ENCODE measurements at regions of chr5 and their contacts with region 1.

Region 1: DNA sequence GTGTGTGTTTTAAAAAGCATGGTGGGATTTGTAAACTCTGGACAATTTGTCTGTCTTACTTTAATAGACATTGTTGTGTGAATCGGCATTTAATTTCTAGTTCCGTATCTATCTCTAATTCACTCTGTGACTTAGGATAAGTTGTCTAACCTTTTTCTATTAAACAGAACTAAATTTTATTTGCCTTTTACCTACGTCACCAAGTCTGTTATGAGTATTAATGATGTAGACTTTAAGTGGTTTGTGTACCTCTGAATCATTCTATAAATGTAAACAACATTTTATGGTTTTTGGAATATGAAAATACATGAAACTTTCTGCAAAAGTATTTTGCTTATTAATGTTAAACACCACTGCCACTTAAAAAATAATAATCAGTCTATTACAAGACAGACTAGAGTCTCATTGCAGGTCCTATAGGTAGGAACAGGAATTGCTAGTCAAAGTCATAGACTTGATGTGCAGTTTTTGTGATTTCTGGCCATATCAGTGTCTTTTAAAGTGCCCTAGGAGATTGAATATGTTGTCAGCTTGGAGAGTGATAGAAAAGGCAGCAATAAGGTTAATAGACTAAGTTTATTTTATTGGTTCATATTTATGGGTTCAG is 5.6 kb downstream of the RBM27 start:
- DNase-seq: no peak
- H3K4me3 Mint-ChIP-seq: no peak overlapping the region
- H3K27ac Mint-ChIP-seq: no peak overlapping the region
- H3K4me1 Mint-ChIP-seq: peaks cover 14% of the 10 kb centered on the region
- H3K27me3 Mint-ChIP-seq: no peaks in the 10 kb centered on the region

Region 2: GRCh38 chr5:146173597-146173996 is 35.4 kb before region 1 on chr5:
- intact Hi-C with region 1: loop called (anchors 5 kb)
- DNase-seq: no peak
- H3K4me3 Mint-ChIP-seq: no peak overlapping the region
- H3K27ac Mint-ChIP-seq: peak overlapping the region; percentile 9
- H3K4me1 Mint-ChIP-seq: peaks cover 15% of the 10 kb centered on the region
- H3K27me3 Mint-ChIP-seq: no peaks in the 10 kb centered on the region

Measured in activated T-helper 1 cell treated with anti-CD3 and anti-CD28 coated beads, Interleukin-12 subunit alpha, Interleukin-12 subunit beta, Interleukin-2, Interleukin-4 antibody, amounts not matched to agents 30 ng/mL and 10 ng/mL and 1 ng/mL, durations not matched to agents 14 hours and 24 hours and 36 hours (primary cell).